AG04450 (cell line): ENCODE measurements at regions of chr22 and their contacts with region 1.

Region 1: DNA sequence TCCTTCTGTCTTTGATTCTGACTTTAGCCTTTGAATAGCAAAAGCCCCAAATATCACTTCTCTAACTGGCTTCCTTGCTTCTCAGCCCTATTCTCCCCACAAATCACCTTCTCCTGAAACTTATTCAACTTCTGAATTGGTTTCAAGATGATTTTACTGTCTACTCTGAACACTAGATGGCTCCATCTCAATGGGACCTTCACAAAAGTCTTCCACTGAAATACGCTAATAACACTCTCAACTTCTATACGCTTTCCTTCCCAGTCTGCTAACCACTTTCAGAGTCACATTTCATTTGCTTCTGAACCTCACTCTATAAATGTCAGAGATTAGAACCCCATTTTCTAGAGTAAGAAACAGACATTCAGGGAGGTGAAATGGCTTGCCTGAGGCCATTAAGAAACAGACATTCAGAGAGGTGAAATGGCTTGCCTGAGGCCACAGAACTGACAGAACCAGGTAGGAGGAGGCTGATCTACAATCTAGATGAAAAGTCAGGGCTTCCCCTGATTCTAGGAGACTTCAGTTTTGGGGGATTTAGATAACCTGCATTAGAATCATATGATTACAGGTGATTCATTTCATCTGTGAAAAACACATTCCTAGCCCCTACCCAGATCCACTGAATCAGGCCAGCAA is 20.6 kb downstream of the MORC2 start:
- DNase-seq: peak; percentile 36
- H3K4me3 ChIP-seq: no peak overlapping the region
- H3K27ac ChIP-seq: no peak overlapping the region
- H3K27me3 ChIP-seq: no peaks in the 10 kb centered on the region
- CTCF ChIP-seq: peak; percentile 66

Region 2: GRCh38 chr22:30927806-30928205 is 20.1 kb before region 1 on chr22:
- CTCF ChIA-PET with region 1: no interaction called
- POLR2A ChIA-PET with region 1: no interaction called
- DNase-seq: no peak
- H3K4me3 ChIP-seq: no peak overlapping the region
- H3K27ac ChIP-seq: no peak overlapping the region
- H3K27me3 ChIP-seq: no peaks in the 10 kb centered on the region
- CTCF ChIP-seq: no peak

Region 3: GRCh38 chr22:31148953-31149627 is 201.2 kb after region 1 on chr22:
- CTCF ChIA-PET with region 1: interaction called, 17 read pairs
- POLR2A ChIA-PET with region 1: no interaction called
- DNase-seq: peak; percentile 54
- H3K4me3 ChIP-seq: no peak overlapping the region
- H3K27ac ChIP-seq: no peak overlapping the region
- H3K27me3 ChIP-seq: no peaks in the 10 kb centered on the region
- CTCF ChIP-seq: peak; percentile 100